ENCODE measurements at regions of chr3 and their contacts with region 1.

Region 1: GRCh38 chr3:64224826-64225610 is at the start of gene PRICKLE2:
- DNase-seq: peak; percentile 81
- H3K4me3 ChIP-seq: peak within 1 kb of the TSS in 2 of 3 experiments; percentile 7 to 25
- H3K27ac ChIP-seq: peak within 1 kb of the TSS; percentile 62
- H3K4me1 ChIP-seq: peaks cover 29% of the 10 kb centered on the region
- H3K27me3 ChIP-seq: no peaks in the 10 kb centered on the region
- CTCF ChIP-seq: peak; percentile 26 to 36
- total RNA-seq, gene PRICKLE2: 23.2 to 50.5 TPM

Region 2: GRCh38 chr3:63753567-63753966 is 471.5 kb before region 1 on chr3:
- CTCF ChIA-PET with region 1: no interaction called
- dilution Hi-C with region 1: no loop called
- in situ Hi-C with region 1: no loop called
- intact Hi-C with region 1: no loop called
- DNase-seq: peak; percentile 24
- H3K4me3 ChIP-seq: no peak overlapping the region
- H3K27ac ChIP-seq: no peak overlapping the region
- H3K4me1 ChIP-seq: no peaks in the 10 kb centered on the region
- H3K27me3 ChIP-seq: no peaks in the 10 kb centered on the region
- CTCF ChIP-seq: no peak

Region 3: GRCh38 chr3:64023187-64023848 is 201.7 kb before region 1 on chr3 and contains the start of gene PSMD6:
- CTCF ChIA-PET with region 1: no interaction called
- dilution Hi-C with region 1: no loop called
- in situ Hi-C with region 1: loop called in 1 of 2 experiments (anchors 10 kb)
- intact Hi-C with region 1: no loop called
- DNase-seq: peak; percentile 81
- H3K4me3 ChIP-seq: peak within 1 kb of the TSS; percentile 81 to 95 (median 85)
- H3K27ac ChIP-seq: peak within 1 kb of the TSS; percentile 90
- H3K4me1 ChIP-seq: peaks cover 10% of the 10 kb centered on the region
- H3K27me3 ChIP-seq: no peaks in the 10 kb centered on the region
- CTCF ChIP-seq: peak; percentile 96 to 100
- total RNA-seq, gene PSMD6: 70.7 to 85.9 TPM

Region 4: GRCh38 chr3:64187065-64187959 is 37.7 kb before region 1 on chr3:
- CTCF ChIA-PET with region 1: no interaction called
- dilution Hi-C with region 1: no loop called
- in situ Hi-C with region 1: no loop called
- intact Hi-C with region 1: loop called (anchors 2 kb)
- DNase-seq: peak; percentile 92
- H3K4me3 ChIP-seq: no peak overlapping the region
- H3K27ac ChIP-seq: peak overlapping the region; percentile 63
- H3K4me1 ChIP-seq: peaks cover 77% of the 10 kb centered on the region
- H3K27me3 ChIP-seq: no peaks in the 10 kb centered on the region
- CTCF ChIP-seq: peak in 1 of 2 donors; percentile 27

Region 5: DNA sequence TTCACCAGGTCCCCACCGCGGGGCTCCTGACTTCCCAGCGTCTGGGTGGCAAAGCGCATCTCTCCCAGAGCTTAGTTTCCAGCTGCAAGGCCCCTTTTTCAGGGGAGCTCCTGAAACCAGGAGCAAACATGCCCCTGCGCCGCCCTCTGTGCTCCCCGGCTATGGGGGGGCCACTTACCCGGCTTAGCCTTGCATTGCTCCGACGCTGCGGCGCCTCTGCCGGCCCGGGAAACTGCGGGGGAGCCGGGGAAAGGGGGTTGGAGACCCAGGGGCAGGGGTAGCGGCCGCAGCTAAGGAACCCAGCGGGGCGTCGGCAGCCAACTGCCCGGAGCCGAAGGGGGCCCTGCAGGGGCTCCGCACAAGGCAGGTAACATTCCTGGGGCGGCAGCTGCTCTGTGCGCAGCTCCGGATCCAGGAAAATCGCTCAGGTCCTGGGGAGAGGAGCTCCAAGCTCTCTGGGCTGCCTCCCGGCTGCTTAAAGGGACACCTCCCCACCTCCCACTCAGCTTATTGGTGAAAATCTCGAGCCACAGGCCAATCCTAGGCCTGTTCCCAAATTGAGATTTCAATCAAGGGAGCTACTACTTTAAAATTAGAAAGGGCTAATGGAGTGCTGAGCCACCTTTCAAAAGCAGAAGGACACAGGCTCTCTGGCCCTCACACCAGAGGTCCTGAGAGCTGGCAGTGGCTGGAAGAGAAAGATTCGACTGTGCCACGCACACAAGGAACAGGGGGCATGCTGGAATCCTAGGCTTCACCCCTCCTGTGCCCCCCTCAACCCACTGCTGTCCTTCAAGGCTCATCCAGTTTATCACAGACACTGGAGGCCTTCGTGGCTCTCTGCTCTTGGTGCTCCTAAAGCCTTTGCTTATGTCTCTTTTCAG is 42.9 kb after region 1 on chr3:
- CTCF ChIA-PET with region 1: no interaction called
- dilution Hi-C with region 1: no loop called
- in situ Hi-C with region 1: no loop called
- intact Hi-C with region 1: loop called (anchors 2 kb)
- DNase-seq: peak; percentile 76
- H3K4me3 ChIP-seq: peak overlapping the region; percentile 68 to 89 (median 84)
- H3K27ac ChIP-seq: peak overlapping the region; percentile 78
- H3K4me1 ChIP-seq: peaks cover 27% of the 10 kb centered on the region
- H3K27me3 ChIP-seq: no peaks in the 10 kb centered on the region
- CTCF ChIP-seq: peak in 1 of 2 donors; percentile 7

Region 6: DNA sequence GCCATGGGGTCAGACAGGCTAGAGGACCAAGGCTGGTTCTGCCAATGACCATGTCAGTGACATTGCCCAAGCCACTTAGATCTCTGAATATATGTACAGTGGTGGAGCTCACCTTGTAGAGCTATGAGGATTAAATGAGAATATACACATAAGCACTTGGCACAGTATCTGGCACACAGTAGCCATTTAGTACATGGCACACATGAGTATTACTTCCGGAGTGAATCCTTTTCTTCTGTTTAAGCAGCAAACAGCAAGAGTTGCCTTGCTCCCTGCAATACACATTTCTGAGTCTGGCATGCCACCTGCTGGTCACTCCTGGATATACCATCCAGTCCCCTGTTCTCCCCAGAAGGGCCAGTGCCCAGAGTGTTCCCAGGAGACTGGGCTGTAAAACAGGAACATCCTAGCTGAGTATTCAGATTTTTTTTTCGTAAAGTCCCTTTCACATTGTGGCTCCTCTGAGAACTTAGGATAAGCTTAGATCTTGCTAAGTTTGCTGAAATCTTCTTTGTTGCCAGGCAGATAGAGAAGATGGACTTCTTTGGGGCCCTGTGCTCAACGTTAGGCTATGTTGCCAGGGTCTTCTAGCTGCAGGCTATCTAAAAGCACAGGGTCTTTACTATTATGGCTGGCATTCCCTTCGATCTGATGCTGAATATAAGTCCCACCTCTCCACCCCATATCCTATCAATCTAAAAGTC is 259.4 kb after region 1 on chr3:
- CTCF ChIA-PET with region 1: no interaction called
- dilution Hi-C with region 1: no loop called
- in situ Hi-C with region 1: no loop called
- intact Hi-C with region 1: loop called (anchors 2 kb)
- DNase-seq: peak; percentile 58
- H3K4me3 ChIP-seq: no peak overlapping the region
- H3K27ac ChIP-seq: no peak overlapping the region
- H3K4me1 ChIP-seq: peaks cover 4% of the 10 kb centered on the region
- H3K27me3 ChIP-seq: no peaks in the 10 kb centered on the region
- CTCF ChIP-seq: peak; percentile 73 to 88